ENCODE measurements at regions of chr4 and their contacts with region 1.

Region 1: GRCh38 chr4:163554870-163555465 is 60.5 kb downstream of the TMA16 start:
- DNase-seq: no peak
- ATAC-seq: no peak
- H3K4me3 ChIP-seq: no peak overlapping the region
- H3K27ac ChIP-seq: no peak overlapping the region
- H3K4me1 ChIP-seq: peaks cover 7% of the 10 kb centered on the region
- H3K27me3 ChIP-seq: no peaks in the 10 kb centered on the region
- CTCF ChIP-seq: peak; percentile 46 to 75 (median 59)
- POLR2A ChIP-seq: no peak

Region 2: GRCh38 chr4:163404580-163404979 is 150.4 kb before region 1 on chr4:
- intact Hi-C with region 1: no loop called
- DNase-seq: peak in 2 of 4 donors; percentile 7 to 35
- ATAC-seq: peak; percentile 84
- H3K4me3 ChIP-seq: no peak overlapping the region
- H3K27ac ChIP-seq: peak overlapping the region in 2 of 4 donors; percentile 58 to 74
- H3K4me1 ChIP-seq: peaks cover 8% of the 10 kb centered on the region
- H3K27me3 ChIP-seq: no peaks in the 10 kb centered on the region
- CTCF ChIP-seq: no peak
- POLR2A ChIP-seq: peak in 2 of 3 donors; percentile 15 to 29

Region 3: DNA sequence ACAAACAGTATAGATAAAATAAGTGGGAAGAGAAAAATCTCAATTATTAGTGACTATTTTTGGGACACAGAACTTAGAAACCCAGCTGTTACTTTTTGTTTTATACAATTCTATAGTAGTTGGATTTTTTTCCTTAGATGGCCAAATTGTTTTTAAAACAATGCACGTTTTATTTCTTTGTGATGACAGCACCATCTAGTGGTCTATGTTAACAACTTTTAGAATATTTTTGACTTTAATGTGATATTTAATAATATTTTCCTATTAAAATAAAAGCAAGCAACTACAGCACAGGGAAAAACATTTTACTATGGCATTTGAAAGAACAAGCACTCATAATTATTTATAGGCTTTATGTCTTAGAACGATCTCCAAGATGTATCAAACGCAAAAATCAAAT is 1193.4 kb after region 1 on chr4:
- intact Hi-C with region 1: loop called (anchors 10 kb)
- DNase-seq: no peak
- ATAC-seq: no peak
- H3K4me3 ChIP-seq: no peak overlapping the region
- H3K27ac ChIP-seq: no peak overlapping the region
- H3K4me1 ChIP-seq: no peaks in the 10 kb centered on the region
- H3K27me3 ChIP-seq: no peaks in the 10 kb centered on the region
- CTCF ChIP-seq: peak in 6 of 7 experiments; percentile 29 to 48 (median 38)
- POLR2A ChIP-seq: no peak